Upper lobe of right lung (tissue), 1 donor: ENCODE measurements at regions of chr13 and their contacts with region 1.

Region 1: GRCh38 chr13:33723772-33724435 is 94.0 kb upstream of the RFC3 start:
- DNase-seq: peak; percentile 72
- ATAC-seq: peak; percentile 95
- H3K4me3 ChIP-seq: no peak overlapping the region
- H3K27ac ChIP-seq: peak overlapping the region; percentile 59
- H3K4me1 ChIP-seq: peaks cover 31% of the 10 kb centered on the region
- H3K27me3 ChIP-seq: no peaks in the 10 kb centered on the region
- CTCF ChIP-seq: peak; percentile 78

Region 2: DNA sequence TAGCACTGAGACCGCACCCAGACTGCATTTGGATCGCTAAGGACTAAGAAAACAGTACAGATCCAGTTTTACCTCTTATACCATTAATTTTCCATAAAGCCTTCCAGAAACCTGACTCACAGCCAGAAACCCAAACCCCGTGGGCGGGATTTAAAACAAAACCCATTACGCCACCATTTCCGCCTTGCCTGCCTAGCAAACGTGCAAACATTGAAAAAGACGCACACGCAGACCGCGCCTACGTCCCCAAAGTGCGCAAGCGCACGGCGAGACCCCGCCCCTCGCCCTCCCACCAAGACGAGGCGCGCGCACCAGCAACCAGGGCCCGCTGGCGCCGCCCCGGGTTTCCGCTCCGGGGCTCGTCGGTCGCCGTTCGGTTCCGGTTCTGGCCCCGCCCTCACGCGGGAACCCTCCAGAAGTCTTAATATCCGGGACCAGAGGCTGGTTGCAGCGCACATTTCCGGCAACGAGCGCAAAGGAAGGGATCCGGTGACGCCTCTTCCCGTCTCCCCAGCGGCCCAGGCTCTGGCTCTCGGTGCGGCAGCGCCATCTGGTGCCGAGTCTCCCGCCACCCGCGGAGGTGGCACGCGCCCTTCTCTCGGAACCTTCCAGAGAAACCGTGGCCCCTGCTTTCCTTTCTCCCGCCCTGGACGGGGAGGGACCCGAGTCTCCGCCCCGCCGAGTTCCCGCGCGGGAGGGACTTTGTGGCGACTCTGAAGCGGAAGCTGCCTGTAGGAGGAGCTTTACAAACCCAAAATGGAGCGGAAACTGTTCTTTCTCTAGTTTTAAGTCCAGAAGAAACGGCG is 181.4 kb before region 1 on chr13:
- intact Hi-C with region 1: loop called (anchors 10 kb)
- DNase-seq: peak; percentile 99
- ATAC-seq: peak; percentile 97
- H3K4me3 ChIP-seq: peak overlapping the region; percentile 64
- H3K27ac ChIP-seq: peak overlapping the region; percentile 99
- H3K4me1 ChIP-seq: peaks cover 32% of the 10 kb centered on the region
- H3K27me3 ChIP-seq: no peaks in the 10 kb centered on the region
- CTCF ChIP-seq: peak; percentile 89

Region 3: DNA sequence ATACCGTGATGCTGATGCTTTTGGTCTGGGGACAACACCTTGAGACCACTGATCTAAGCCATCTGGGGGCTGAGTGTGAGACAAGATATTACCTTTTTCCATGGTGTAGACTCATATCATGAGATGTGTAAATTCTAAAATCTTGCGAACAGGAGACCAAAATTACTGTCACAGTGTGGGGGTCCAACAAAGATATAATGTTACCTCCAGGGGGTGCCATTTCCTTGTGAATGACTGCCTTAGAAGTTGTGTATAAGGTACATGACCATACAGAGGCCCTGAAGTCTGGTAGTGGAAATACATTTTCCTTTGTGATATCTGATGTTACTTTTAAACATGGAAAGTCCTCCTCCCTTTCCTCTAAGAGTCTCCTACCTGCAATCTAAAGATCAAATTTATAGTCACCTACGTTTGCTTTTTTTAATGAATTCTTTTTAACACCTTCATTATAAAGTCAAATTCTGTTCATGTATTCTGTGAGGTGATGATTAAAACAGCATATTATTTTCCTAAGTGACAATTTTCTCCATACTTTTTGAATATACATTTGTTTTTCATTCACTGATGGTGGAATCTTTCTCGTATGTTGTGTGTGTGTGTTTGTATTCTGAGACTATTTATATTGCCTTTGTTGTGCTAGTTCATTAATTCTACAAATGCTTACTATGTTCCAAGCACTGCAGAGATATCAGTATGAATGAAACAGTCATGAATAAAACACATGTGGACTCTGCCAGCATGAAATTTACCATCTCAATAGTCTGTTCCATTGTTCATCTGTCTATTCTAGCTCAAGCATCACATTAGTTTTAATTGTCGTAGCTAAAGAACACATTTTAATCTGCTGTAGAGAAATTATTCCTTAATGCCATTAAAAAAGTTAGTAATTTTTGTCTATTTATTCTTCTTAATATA is 207.8 kb after region 1 on chr13:
- intact Hi-C with region 1: no loop called
- DNase-seq: no peak
- ATAC-seq: peak; percentile 74
- H3K4me3 ChIP-seq: no peak overlapping the region
- H3K27ac ChIP-seq: no peak overlapping the region
- H3K4me1 ChIP-seq: no peaks in the 10 kb centered on the region
- H3K27me3 ChIP-seq: no peaks in the 10 kb centered on the region
- CTCF ChIP-seq: peak; percentile 45